Breast epithelium (tissue), 4 donors: ENCODE measurements at regions of chr19 and their contacts with region 1.

Region 1: DNA sequence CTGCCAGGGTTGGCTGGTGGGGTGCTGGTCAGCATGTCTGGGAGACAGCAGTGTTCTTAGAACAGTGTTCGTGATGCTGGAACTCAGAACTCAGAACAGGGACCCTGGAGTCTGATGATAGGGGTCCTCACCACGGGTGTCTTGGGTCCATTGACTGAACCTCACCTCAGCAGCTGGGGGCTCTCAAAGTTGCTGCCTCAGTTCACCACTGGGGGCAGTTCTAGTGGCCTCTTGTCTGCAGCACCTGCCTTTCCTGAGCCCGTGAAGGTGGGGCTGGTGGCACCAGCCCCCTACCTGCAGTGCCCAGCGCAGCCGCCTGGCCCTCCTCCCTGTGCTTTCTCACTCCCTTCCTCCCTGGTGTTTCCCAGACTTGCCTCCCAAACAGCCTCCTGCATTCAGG is 28.5 kb downstream of the SAFB start:
- DNase-seq: no peak
- H3K4me3 ChIP-seq: no peak overlapping the region
- H3K27ac ChIP-seq: no peak overlapping the region
- H3K4me1 ChIP-seq: no peaks in the 10 kb centered on the region
- H3K27me3 ChIP-seq: no peaks in the 10 kb centered on the region
- CTCF ChIP-seq: no peak
- POLR2A ChIP-seq: no peak

Region 2: GRCh38 chr19:5627395-5627904 is 23.9 kb before region 1 on chr19:
- intact Hi-C with region 1: loop called (anchors 1 kb)
- DNase-seq: peak in 1 of 2 donors; percentile 33
- H3K4me3 ChIP-seq: no peak overlapping the region
- H3K27ac ChIP-seq: peak overlapping the region in 1 of 2 donors; percentile 33
- H3K4me1 ChIP-seq: peaks cover 0 to 31% of the 10 kb centered on the region in 2 donors
- H3K27me3 ChIP-seq: no peaks in the 10 kb centered on the region
- CTCF ChIP-seq: no peak
- POLR2A ChIP-seq: no peak

Region 3: DNA sequence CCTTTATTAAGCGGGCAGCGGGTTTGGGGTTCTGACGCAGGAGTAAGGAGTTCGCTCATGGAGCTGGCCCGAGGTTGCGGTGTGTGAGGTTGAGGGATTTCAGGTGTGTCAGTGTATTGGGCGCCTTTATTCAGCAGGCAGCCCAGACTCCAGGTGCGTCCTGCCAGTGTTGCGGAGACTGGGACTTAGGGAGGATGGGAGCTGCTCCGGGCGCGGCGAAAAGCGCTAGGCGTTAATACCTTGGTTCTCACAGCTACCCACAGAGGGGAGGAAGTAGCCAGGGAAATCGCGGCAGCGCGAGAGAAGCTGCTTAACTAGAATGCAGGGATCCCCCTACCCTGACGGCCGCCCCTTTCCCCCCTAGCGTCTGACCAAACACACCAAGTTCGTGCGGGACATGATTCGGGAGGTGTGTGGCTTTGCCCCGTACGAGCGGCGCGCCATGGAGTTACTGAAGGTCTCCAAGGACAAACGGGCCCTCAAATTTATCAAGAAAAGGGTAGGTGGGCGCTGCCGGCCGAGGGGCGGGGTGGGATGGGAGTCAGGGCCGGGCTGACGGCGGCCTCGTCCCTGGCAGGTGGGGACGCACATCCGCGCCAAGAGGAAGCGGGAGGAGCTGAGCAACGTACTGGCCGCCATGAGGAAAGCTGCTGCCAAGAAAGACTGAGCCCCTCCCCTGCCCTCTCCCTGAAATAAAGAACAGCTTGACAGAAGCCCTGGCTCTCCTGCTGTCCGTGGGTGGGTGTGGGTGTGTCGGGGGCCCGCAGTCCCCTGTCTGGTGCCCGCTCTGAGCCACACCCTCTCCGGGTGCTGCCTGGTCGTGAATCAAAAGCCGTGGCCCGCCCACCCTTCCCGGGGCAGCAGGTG is 39.8 kb after region 1 on chr19:
- intact Hi-C with region 1: no loop called
- DNase-seq: peak; percentile 63 to 68
- H3K4me3 ChIP-seq: peak overlapping the region; percentile 81 to 99 (median 85)
- H3K27ac ChIP-seq: peak overlapping the region; percentile 97
- H3K4me1 ChIP-seq: peaks cover 7 to 8% of the 10 kb centered on the region in 2 donors
- H3K27me3 ChIP-seq: no peaks in the 10 kb centered on the region
- CTCF ChIP-seq: no peak
- POLR2A ChIP-seq: no peak

Region 4: DNA sequence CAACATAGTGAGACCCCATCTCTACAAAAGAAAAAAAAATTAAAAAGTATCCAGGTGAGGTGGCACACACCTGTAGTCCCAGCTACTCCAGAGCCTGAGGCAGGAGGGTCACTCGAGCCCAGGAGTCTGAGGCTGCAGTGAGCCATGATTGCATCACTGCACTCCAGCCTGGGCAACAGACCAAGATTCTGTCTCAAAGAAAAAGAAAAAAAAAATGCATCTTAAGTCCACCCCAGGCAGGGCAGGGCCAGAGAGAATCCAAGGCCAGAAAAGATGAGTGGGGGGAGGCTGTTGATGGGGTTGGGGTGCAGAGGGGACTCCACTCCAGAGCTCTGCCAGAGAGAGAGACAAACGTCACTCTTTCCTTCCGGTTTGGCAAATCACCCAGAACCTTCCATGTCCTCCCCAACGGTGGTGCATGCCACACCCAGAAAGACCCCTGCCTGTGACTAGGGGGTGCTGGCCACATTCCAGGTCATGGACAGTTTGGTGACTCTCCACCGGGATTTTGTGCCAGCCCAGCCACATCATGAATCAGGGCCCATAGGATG is 199.5 kb after region 1 on chr19:
- intact Hi-C with region 1: no loop called
- DNase-seq: peak in 1 of 2 donors; percentile 53
- H3K4me3 ChIP-seq: peak overlapping the region in 1 of 3 donors; percentile 6
- H3K27ac ChIP-seq: peak overlapping the region; percentile 52 to 54
- H3K4me1 ChIP-seq: no peaks in the 10 kb centered on the region
- H3K27me3 ChIP-seq: no peaks in the 10 kb centered on the region
- CTCF ChIP-seq: no peak
- POLR2A ChIP-seq: no peak

Region 5: GRCh38 chr19:6038634-6039405 is 387.5 kb after region 1 on chr19:
- intact Hi-C with region 1: no loop called
- DNase-seq: peak in 1 of 2 donors; percentile 39
- H3K4me3 ChIP-seq: no peak overlapping the region
- H3K27ac ChIP-seq: no peak overlapping the region
- H3K4me1 ChIP-seq: no peaks in the 10 kb centered on the region
- H3K27me3 ChIP-seq: no peaks in the 10 kb centered on the region
- CTCF ChIP-seq: no peak
- POLR2A ChIP-seq: no peak